ENCODE measurements at regions of chr11 and their contacts with region 1.

Region 1: GRCh38 chr11:18768472-18768901 is 23.1 kb downstream of the PTPN5 start:
- DNase-seq: no peak
- ATAC-seq: no peak
- H3K4me3 Mint-ChIP-seq: no peak overlapping the region
- H3K27ac Mint-ChIP-seq: no peak overlapping the region
- H3K4me1 Mint-ChIP-seq: peaks cover 34% of the 10 kb centered on the region
- H3K27me3 Mint-ChIP-seq: peaks cover 2% of the 10 kb centered on the region
- CTCF ChIP-seq: no peak

Region 2: DNA sequence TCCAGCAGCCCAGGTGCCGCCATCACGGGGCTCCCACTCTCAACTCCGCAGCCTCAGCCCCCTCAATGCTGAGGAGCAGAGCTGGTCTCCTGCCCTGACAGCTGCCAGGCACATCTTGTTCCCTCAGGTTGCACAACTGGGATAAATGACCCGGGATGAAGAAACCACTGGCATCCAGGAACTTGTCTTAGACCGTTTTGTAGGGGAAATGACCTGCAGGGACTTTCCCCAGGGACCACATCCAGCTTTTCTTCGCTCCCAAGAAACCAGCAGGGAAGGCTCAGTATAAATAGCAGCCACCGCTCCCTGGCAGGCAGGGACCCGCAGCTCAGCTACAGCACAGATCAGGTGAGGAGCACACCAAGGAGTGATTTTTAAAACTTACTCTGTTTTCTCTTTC is 502.5 kb before region 1 on chr11 and contains the start of gene SAA1:
- CTCF ChIA-PET with region 1: no interaction called
- POLR2A ChIA-PET with region 1: no interaction called
- DNase-seq: no peak
- ATAC-seq: no peak
- H3K4me3 Mint-ChIP-seq: no peak within 1 kb of the TSS
- H3K27ac Mint-ChIP-seq: no peak within 1 kb of the TSS
- H3K4me1 Mint-ChIP-seq: peaks cover 7% of the 10 kb centered on the region; the same call in 1 of the 2 replicates
- H3K27me3 Mint-ChIP-seq: no peaks in the 10 kb centered on the region
- CTCF ChIP-seq: no peak
- total RNA-seq, gene SAA1: 7.7 to 12.8 TPM (median 8.8 TPM) in 3 replicates

Region 3: GRCh38 chr11:18540207-18541009 is 228.1 kb before region 1 on chr11:
- CTCF ChIA-PET with region 1: interaction called, 11 read pairs
- POLR2A ChIA-PET with region 1: no interaction called
- DNase-seq: no peak
- ATAC-seq: peak; percentile 53; the same call in 1 of the 2 replicates
- H3K4me3 Mint-ChIP-seq: no peak overlapping the region
- H3K27ac Mint-ChIP-seq: no peak overlapping the region
- H3K4me1 Mint-ChIP-seq: no peaks in the 10 kb centered on the region
- H3K27me3 Mint-ChIP-seq: no peaks in the 10 kb centered on the region
- CTCF ChIP-seq: no peak

Region 4: GRCh38 chr11:18684267-18684666 is 84.2 kb before region 1 on chr11:
- CTCF ChIA-PET with region 1: no interaction called
- POLR2A ChIA-PET with region 1: no interaction called
- DNase-seq: no peak
- ATAC-seq: no peak
- H3K4me3 Mint-ChIP-seq: no peak overlapping the region
- H3K27ac Mint-ChIP-seq: no peak overlapping the region
- H3K4me1 Mint-ChIP-seq: 0 out of 2 replicates have a peak, but pooled peaks cover 5% of the 10 kb centered on the region
- H3K27me3 Mint-ChIP-seq: no peaks in the 10 kb centered on the region; the same call in 1 of the 2 replicates
- CTCF ChIP-seq: no peak

Region 5: GRCh38 chr11:18721561-18722292 is 46.8 kb before region 1 on chr11:
- CTCF ChIA-PET with region 1: interaction called, 20 read pairs
- POLR2A ChIA-PET with region 1: no interaction called
- DNase-seq: peak; percentile 70
- ATAC-seq: peak; percentile 66
- H3K4me3 Mint-ChIP-seq: peak overlapping the region; percentile 82
- H3K27ac Mint-ChIP-seq: no peak overlapping the region
- H3K4me1 Mint-ChIP-seq: peaks cover 15% of the 10 kb centered on the region
- H3K27me3 Mint-ChIP-seq: peaks cover 46% of the 10 kb centered on the region
- CTCF ChIP-seq: peak; percentile 85

Region 6: DNA sequence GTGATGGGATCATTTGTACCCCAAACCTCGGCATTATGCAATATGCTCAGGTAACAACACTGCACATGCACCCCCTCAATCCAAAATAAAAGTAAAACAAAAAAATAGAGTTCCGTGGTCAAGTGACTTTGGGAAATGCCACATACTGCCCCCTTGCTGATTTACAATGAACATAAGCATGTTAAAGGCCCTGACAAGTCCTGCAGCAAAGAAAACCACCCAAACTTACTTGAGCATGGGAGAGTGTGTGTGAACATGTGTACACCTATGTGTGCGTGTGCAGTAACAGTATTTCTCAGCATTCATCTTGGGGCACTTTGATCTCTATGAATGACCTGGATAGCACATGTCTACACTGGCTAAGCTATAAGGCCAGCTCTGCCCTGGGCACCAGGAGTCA is 26.7 kb before region 1 on chr11:
- CTCF ChIA-PET with region 1: interaction called, 11 read pairs
- POLR2A ChIA-PET with region 1: interaction called, 4 read pairs
- DNase-seq: no peak
- ATAC-seq: no peak
- H3K4me3 Mint-ChIP-seq: no peak overlapping the region
- H3K27ac Mint-ChIP-seq: no peak overlapping the region
- H3K4me1 Mint-ChIP-seq: no peaks in the 10 kb centered on the region
- H3K27me3 Mint-ChIP-seq: no peaks in the 10 kb centered on the region
- CTCF ChIP-seq: no peak

Region 7: GRCh38 chr11:18780896-18781295 is 12.4 kb after region 1 on chr11:
- CTCF ChIA-PET with region 1: interaction called, 46 read pairs
- POLR2A ChIA-PET with region 1: no interaction called
- DNase-seq: no peak
- ATAC-seq: no peak
- H3K4me3 Mint-ChIP-seq: no peak overlapping the region
- H3K27ac Mint-ChIP-seq: no peak overlapping the region
- H3K4me1 Mint-ChIP-seq: peaks cover 14% of the 10 kb centered on the region
- H3K27me3 Mint-ChIP-seq: no peaks in the 10 kb centered on the region; the same call in 1 of the 2 replicates
- CTCF ChIP-seq: no peak

Region 8: GRCh38 chr11:18802381-18803257 is 34.1 kb after region 1 on chr11:
- CTCF ChIA-PET with region 1: interaction called, 52 read pairs
- POLR2A ChIA-PET with region 1: no interaction called
- DNase-seq: peak; percentile 45
- ATAC-seq: peak; percentile 88
- H3K4me3 Mint-ChIP-seq: no peak overlapping the region
- H3K27ac Mint-ChIP-seq: no peak overlapping the region
- H3K4me1 Mint-ChIP-seq: peaks cover 2% of the 10 kb centered on the region; the same call in 1 of the 2 replicates
- H3K27me3 Mint-ChIP-seq: peaks cover 37% of the 10 kb centered on the region
- CTCF ChIP-seq: peak; percentile 18; the same call in 1 of the 2 replicates